AG04450 (cell line): ENCODE measurements at regions of chr11 and their contacts with region 1.

Region 1: DNA sequence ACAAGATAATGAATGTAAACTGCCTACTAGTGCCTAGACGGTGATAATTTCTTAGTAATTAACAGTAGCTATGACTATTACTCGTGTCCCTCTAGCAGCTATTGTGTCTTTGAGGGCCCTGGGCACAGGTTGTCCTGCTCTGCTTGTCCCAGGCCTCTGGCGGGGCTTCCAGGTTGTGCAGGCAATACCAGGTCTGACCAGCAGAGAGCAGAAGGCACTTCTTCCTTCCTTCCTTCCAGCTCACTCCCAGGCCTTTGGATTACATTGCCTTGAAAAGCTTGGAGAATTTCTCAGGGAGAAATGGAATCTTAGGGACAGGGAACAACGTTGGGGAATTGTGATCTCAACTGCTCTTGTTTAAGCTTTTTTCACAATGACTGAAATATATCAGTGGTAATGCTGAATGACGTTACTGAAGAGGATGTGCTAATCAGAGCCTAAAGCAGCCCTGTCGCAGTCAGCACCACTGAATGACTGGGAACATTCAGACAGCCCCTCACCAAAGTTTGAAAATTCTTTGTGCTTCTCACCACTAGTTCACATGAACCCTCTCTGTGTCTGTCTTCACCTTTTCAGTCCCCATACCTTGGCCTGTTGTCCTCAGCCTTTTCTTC is 8.4 kb upstream of the CCKBR start:
- DNase-seq: peak; percentile 32
- H3K4me3 ChIP-seq: no peak overlapping the region
- H3K27ac ChIP-seq: no peak overlapping the region
- H3K27me3 ChIP-seq: peaks cover 7% of the 10 kb centered on the region
- CTCF ChIP-seq: peak; percentile 92

Region 2: DNA sequence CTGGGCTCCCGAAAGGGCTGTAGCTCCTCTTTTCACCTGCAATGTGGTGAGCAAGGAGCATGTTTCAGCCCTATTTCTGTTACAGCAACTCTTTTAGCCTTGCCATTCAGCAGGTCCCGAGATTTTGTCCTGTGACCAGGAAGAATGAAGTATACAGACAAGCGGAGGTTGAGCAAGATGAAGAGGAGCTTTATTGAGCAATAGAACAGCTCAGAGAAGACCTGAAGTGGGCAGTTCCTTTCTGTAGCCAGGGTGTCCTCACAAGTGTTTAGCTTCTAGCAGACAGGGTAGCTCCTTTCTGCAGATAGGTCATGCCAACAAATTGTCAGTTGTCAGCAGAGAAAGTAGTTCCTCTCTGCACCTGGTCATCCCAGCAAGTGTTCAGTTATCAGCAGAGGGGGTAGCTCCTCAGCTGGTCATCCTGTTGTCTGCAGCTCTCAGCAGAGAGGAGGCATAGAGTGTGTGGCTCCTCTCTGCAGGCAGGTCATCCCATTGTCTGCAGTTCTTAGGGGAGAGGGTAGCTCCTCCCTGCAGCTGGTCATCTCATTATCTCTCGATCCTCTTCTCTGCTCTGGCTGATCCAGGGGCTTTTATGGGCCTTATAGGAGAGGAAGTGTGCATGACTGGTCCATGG is 239.1 kb before region 1 on chr11:
- CTCF ChIA-PET with region 1: no interaction called
- POLR2A ChIA-PET with region 1: no interaction called
- DNase-seq: no peak
- H3K4me3 ChIP-seq: no peak overlapping the region
- H3K27ac ChIP-seq: no peak overlapping the region
- H3K27me3 ChIP-seq: no peaks in the 10 kb centered on the region
- CTCF ChIP-seq: no peak

Region 3: GRCh38 chr11:6124245-6124644 is 127.0 kb before region 1 on chr11:
- CTCF ChIA-PET with region 1: no interaction called
- POLR2A ChIA-PET with region 1: no interaction called
- DNase-seq: no peak
- H3K4me3 ChIP-seq: no peak overlapping the region
- H3K27ac ChIP-seq: no peak overlapping the region
- H3K27me3 ChIP-seq: no peaks in the 10 kb centered on the region
- CTCF ChIP-seq: no peak

Region 4: DNA sequence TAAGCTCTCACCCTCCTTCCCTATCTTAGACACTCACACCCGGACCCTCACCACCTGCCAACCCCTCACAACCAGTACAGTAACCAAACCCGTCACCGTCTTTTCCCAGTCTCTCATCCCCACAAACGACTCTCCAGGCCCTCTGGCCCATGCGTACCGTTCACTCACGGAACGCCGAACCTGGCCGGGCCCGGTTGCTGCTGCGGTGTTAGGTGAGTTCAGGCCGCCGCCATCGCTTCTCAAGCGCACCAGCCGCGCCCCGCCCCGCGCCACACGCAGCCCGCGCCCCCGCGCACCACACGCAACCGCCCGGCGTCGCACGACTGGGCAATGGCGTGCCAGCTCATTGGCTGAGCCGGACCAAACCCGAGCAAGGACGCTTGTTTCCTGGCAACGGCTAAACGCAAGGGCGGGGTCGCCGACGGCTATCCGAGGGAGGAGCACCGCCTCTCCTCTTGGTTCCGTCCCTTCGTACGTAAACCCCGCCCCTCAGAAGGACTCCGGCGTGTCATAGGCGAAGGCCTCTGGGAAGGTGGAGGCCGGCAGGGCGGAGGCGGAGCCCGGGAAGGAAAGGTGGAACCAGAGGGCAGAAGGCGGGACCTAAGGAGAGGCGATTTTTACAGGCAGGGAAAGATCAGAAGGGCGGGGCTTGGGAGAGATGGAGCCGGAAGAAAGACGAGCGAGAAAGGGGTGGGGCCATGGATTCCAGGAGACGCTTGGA is 16.7 kb before region 1 on chr11 and contains the start of gene FHIP1B:
- CTCF ChIA-PET with region 1: interaction called, 61 read pairs
- POLR2A ChIA-PET with region 1: no interaction called
- DNase-seq: peak; percentile 100
- H3K4me3 ChIP-seq: peak within 1 kb of the TSS; percentile 99
- H3K27ac ChIP-seq: peak within 1 kb of the TSS; percentile 52
- H3K27me3 ChIP-seq: peaks cover 3% of the 10 kb centered on the region
- CTCF ChIP-seq: no peak
- polyA plus RNA-seq, gene FHIP1B: 18.9 and 19.8 TPM in 2 replicates

Region 5: GRCh38 chr11:6273188-6273587 is 22.0 kb after region 1 on chr11:
- CTCF ChIA-PET with region 1: interaction called, 13 read pairs
- POLR2A ChIA-PET with region 1: interaction called, 3 read pairs
- DNase-seq: no peak
- H3K4me3 ChIP-seq: no peak overlapping the region
- H3K27ac ChIP-seq: no peak overlapping the region
- H3K27me3 ChIP-seq: peaks cover 8% of the 10 kb centered on the region
- CTCF ChIP-seq: no peak

Region 6: DNA sequence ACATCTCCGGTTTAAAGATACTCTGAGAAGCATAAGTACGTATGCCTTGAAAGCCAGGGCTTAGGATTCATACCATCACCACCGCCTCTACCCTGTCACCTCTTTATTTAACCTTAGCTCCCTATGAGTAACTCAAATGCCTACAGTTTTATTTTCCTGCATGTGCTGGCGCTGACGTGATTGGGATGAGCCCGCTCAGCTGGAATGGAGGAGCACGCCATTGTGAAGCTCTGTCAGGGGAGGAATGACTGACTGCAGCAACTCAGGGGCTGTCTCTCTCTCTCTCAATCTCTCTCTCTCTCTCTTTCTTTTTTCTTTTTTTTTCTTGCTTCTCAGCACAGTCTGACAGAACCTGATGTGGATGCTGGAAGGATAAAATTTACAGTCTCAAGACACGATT is 56.6 kb after region 1 on chr11:
- CTCF ChIA-PET with region 1: interaction called, 39 read pairs
- POLR2A ChIA-PET with region 1: no interaction called
- DNase-seq: no peak
- H3K4me3 ChIP-seq: no peak overlapping the region
- H3K27ac ChIP-seq: no peak overlapping the region
- H3K27me3 ChIP-seq: no peaks in the 10 kb centered on the region
- CTCF ChIP-seq: no peak

Region 7: DNA sequence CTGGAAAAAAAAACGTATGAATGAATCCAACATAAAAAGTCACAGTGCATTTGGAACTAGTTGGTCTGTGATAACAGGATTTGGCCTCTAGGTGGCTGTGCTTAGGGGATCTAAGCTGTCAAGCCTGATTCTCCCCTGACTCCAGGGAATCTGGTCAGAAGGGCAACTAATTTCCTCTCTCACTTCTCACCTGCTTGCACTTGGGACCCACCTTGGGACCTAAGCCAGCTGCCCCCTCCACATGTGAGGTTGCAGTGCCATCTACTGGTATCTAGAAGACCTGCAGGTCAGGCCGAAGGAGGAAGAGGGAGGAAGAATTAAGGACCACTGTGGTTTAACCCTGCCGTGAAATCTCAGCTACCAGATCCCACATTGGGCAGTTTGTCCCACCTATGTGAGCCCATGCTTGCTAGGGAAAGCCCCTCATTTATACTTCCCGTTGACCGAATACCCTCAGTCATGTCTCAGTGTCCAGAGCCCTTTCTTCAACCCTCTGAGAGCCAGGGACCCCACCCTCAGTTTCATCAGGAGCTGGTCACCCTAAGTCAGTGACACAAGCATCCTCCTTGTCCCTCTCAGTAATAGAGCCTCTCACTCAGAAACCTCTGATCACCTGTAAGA is 102.2 kb after region 1 on chr11:
- CTCF ChIA-PET with region 1: interaction called, 172 read pairs
- POLR2A ChIA-PET with region 1: no interaction called
- DNase-seq: no peak
- H3K4me3 ChIP-seq: no peak overlapping the region
- H3K27ac ChIP-seq: no peak overlapping the region
- H3K27me3 ChIP-seq: no peaks in the 10 kb centered on the region
- CTCF ChIP-seq: peak; percentile 98